ENCODE measurements at regions of chr11 and their contacts with region 1.

Region 1: GRCh38 chr11:75993126-75993525 is 178.1 kb downstream of the UVRAG start:
- DNase-seq: no peak
- ATAC-seq: no peak
- H3K4me3 ChIP-seq: no peak overlapping the region
- H3K4me3 Mint-ChIP-seq: no peak overlapping the region
- H3K27ac ChIP-seq: no peak overlapping the region
- H3K27ac Mint-ChIP-seq: no peak overlapping the region
- H3K4me1 ChIP-seq: no peaks in the 10 kb centered on the region
- H3K4me1 Mint-ChIP-seq: peaks cover 12% of the 10 kb centered on the region
- H3K27me3 ChIP-seq: no peaks in the 10 kb centered on the region
- H3K27me3 Mint-ChIP-seq: no peaks in the 10 kb centered on the region
- CTCF ChIP-seq: no peak

Region 2: GRCh38 chr11:75078233-75078632 is 914.9 kb before region 1 on chr11:
- CTCF ChIA-PET with region 1: no interaction called
- POLR2A ChIA-PET with region 1: no interaction called
- intact Hi-C with region 1: loop called in 1 of 2 experiments (anchors 5 kb)
- DNase-seq: no peak
- ATAC-seq: no peak
- H3K4me3 ChIP-seq: no peak overlapping the region
- H3K4me3 Mint-ChIP-seq: no peak overlapping the region
- H3K27ac ChIP-seq: no peak overlapping the region
- H3K27ac Mint-ChIP-seq: no peak overlapping the region
- H3K4me1 ChIP-seq: no peaks in the 10 kb centered on the region
- H3K4me1 Mint-ChIP-seq: no peaks in the 10 kb centered on the region
- H3K27me3 ChIP-seq: no peaks in the 10 kb centered on the region
- H3K27me3 Mint-ChIP-seq: peaks cover 31% of the 10 kb centered on the region
- CTCF ChIP-seq: no peak

Region 3: GRCh38 chr11:75938543-75938942 is 54.6 kb before region 1 on chr11:
- CTCF ChIA-PET with region 1: no interaction called
- POLR2A ChIA-PET with region 1: no interaction called
- intact Hi-C with region 1: no loop called
- DNase-seq: no peak
- ATAC-seq: no peak
- H3K4me3 ChIP-seq: no peak overlapping the region
- H3K4me3 Mint-ChIP-seq: no peak overlapping the region
- H3K27ac ChIP-seq: no peak overlapping the region
- H3K27ac Mint-ChIP-seq: no peak overlapping the region
- H3K4me1 ChIP-seq: no peaks in the 10 kb centered on the region
- H3K4me1 Mint-ChIP-seq: peaks cover 8% of the 10 kb centered on the region
- H3K27me3 ChIP-seq: no peaks in the 10 kb centered on the region
- H3K27me3 Mint-ChIP-seq: no peaks in the 10 kb centered on the region
- CTCF ChIP-seq: no peak

Region 4: GRCh38 chr11:75982309-75982708 is 10.8 kb before region 1 on chr11:
- CTCF ChIA-PET with region 1: no interaction called
- POLR2A ChIA-PET with region 1: no interaction called
- intact Hi-C with region 1: no loop called
- DNase-seq: no peak
- ATAC-seq: no peak
- H3K4me3 ChIP-seq: no peak overlapping the region
- H3K4me3 Mint-ChIP-seq: no peak overlapping the region
- H3K27ac ChIP-seq: no peak overlapping the region
- H3K27ac Mint-ChIP-seq: no peak overlapping the region
- H3K4me1 ChIP-seq: no peaks in the 10 kb centered on the region
- H3K4me1 Mint-ChIP-seq: peaks cover 23% of the 10 kb centered on the region
- H3K27me3 ChIP-seq: no peaks in the 10 kb centered on the region
- H3K27me3 Mint-ChIP-seq: no peaks in the 10 kb centered on the region
- CTCF ChIP-seq: no peak

Measured in CD8-positive, alpha-beta T cell (primary cell).